ENCODE measurements at regions of chr14 and their contacts with region 1.

Region 1: GRCh38 chr14:49879683-49880204 is 13.1 kb upstream of the ARF6 start:
- DNase-seq: peak; percentile 59 to 89
- ATAC-seq: peak; percentile 89 to 95
- H3K4me3 ChIP-seq: no peak overlapping the region
- H3K27ac ChIP-seq: peak overlapping the region; percentile 3 to 38; a peak in 2 of 6 replicates
- H3K4me1 ChIP-seq: 0 out of 3 replicates have a peak, but pooled peaks cover 3% of the 10 kb centered on the region
- CTCF ChIP-seq: peak; percentile 53; the same call in 2 of the 3 replicates
- EP300 ChIP-seq: no peak
- POLR2A ChIP-seq: no peak
- RAD21 ChIP-seq: peak; percentile 53 to 72

Region 2: DNA sequence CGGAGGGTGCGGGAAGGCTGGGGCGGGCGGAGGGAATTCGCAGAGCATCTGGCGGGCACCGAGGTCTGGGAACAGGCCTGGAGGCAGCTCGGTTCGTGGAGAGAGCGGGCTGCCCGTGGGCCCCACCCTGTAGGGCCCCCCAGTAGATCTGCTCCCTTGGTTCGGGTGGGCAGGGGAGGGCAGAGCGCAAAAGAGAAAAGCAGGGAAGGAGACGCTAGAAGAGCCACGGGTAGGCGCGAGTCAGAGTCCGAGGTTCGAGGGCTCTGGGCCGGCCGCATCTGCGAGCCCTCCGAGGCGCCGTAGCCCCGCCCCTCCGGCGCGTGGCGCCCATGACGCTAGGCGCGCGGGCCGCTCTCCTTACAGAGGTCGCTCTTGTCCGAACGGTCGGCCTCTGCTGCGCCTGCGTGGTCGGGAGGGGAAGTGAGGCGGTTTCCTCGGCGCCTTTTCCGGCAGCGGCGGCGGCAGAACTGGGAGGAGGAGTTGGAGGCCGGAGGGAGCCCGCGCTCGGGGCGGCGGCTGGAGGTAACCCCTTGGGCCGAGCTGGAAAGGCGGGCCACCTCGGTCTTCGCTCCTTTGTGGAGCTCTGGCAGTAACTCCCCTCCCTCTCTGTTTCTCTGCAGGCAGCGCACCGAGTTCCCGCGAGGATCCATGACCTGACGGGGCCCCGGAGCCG is 13.0 kb after region 1 on chr14 and contains the start of gene ARF6:
- CTCF ChIA-PET with region 1: interaction called, 12 read pairs
- POLR2A ChIA-PET with region 1: interaction called, 7 read pairs
- DNase-seq: peak; percentile 87 to 98
- ATAC-seq: peak; percentile 94 to 95
- H3K4me3 ChIP-seq: peak within 1 kb of the TSS; percentile 67
- H3K27ac ChIP-seq: peak within 1 kb of the TSS; percentile 96 to 98
- H3K4me1 ChIP-seq: peaks cover 21% of the 10 kb centered on the region
- CTCF ChIP-seq: 0 out of 3 replicates have a peak, but pooled peaks have one; percentile 12
- EP300 ChIP-seq: no peak
- POLR2A ChIP-seq: peak; percentile 78
- RAD21 ChIP-seq: peak; percentile 18 to 46; a peak in 4 of 5 replicates
- polyA plus RNA-seq, gene ARF6: 29.8 and 33.3 TPM in 2 replicates

Region 3: DNA sequence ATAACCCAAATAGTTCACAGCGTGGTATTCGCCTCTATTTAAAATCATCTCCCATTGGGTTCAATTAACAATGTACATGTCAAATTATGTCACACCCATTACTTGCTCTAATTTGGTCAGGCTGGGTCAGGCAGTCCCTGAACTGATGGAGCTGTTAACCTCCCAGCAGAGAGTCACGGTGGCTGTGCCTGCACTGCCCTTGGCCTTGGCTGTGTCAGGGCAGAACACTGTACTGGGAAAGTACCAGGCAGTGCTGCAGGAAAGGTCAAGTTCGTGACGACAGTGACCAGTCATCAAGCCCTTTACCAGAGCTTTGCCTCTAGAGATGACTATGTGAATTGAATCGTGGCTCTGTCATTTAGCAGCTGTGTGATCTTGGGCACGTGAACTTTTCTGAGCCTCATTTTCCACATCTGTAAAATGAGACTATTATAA is 113.2 kb after region 1 on chr14:
- CTCF ChIA-PET with region 1: interaction called, 11 read pairs
- POLR2A ChIA-PET with region 1: no interaction called
- DNase-seq: peak in 1 of 2 experiments; percentile 88
- ATAC-seq: peak; percentile 90 to 94
- H3K4me3 ChIP-seq: no peak overlapping the region
- H3K27ac ChIP-seq: peak overlapping the region; percentile 69 to 80
- H3K4me1 ChIP-seq: peaks cover 52% of the 10 kb centered on the region
- CTCF ChIP-seq: no peak
- EP300 ChIP-seq: 0 out of 5 replicates have a peak, but pooled peaks of 1 of the 2 experiments have one; percentile 11
- POLR2A ChIP-seq: peak; percentile 30; the same call in 1 of the 2 replicates
- RAD21 ChIP-seq: no peak; a peak in 1 of 5 replicates

Region 4: GRCh38 chr14:50099335-50099734 is 219.6 kb after region 1 on chr14:
- CTCF ChIA-PET with region 1: interaction called, 26 read pairs
- POLR2A ChIA-PET with region 1: no interaction called
- DNase-seq: no peak
- ATAC-seq: peak in 1 of 2 experiments; percentile 33; a peak in 1 of 6 replicates
- H3K4me3 ChIP-seq: no peak overlapping the region
- H3K27ac ChIP-seq: no peak overlapping the region
- H3K4me1 ChIP-seq: peaks cover 10% of the 10 kb centered on the region; the same call in 2 of the 3 replicates
- CTCF ChIP-seq: no peak
- EP300 ChIP-seq: no peak
- POLR2A ChIP-seq: no peak
- RAD21 ChIP-seq: no peak

Region 5: GRCh38 chr14:50106178-50106577 is 226.4 kb after region 1 on chr14:
- CTCF ChIA-PET with region 1: interaction called, 26 read pairs
- POLR2A ChIA-PET with region 1: no interaction called
- DNase-seq: no peak
- ATAC-seq: peak in 1 of 2 experiments; percentile 39; a peak in 3 of 6 replicates
- H3K4me3 ChIP-seq: no peak overlapping the region
- H3K27ac ChIP-seq: no peak overlapping the region
- H3K4me1 ChIP-seq: peaks cover 15% of the 10 kb centered on the region; the same call in 2 of the 3 replicates
- CTCF ChIP-seq: no peak
- EP300 ChIP-seq: no peak
- POLR2A ChIP-seq: no peak
- RAD21 ChIP-seq: no peak